B cell (primary cell): ENCODE measurements at regions of chr1 and their contacts with region 1.

Region 1: DNA sequence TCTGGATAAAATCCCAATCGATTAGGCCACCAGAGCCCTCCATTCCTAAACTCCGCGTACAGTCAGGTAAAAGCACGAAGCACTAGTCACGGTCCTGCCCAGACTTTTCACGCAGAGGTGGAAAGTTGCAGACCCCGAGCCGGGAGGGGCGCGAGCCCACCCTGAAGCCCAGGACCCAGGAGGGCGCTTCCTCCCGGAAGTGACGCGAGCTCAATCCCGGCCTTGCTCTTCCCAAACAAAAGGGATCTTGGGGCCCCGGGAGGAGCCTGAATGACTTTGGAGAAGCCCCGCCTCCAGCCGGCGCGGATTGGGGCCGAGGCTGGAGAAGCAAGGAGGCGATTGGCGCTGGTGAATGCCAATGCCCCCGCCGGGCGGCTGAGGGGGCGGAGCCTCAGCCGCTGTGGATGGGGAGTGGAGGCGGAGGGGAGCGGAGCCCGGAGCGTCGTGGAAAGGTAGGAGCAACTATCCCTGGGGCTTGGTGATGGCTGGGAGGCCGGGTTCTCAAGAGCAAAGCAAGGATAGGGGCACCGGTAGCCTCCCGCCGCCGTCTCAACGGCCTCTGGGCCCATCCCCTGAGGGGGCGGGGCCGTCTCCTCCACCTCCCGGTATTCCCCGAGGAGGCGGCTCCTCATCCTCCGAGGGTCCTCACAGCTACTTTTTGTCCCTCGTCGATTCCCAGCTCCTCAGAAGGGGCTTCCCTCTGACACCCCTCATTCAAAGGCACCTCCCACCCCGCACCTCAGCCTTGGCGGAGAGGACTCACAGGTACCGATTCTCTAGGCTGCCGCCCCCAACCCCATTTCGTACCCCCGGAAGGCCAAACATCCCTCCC is at the start of gene CTTNBP2NL:
- DNase-seq: peak; percentile 86
- ATAC-seq: peak; percentile 96
- H3K4me3 ChIP-seq: peak within 1 kb of the TSS; percentile 24 to 98 (median 91)
- H3K4me3 Mint-ChIP-seq: peak within 1 kb of the TSS; percentile 98
- H3K27ac ChIP-seq: peak within 1 kb of the TSS in 1 of 2 donors; percentile 50
- H3K27ac Mint-ChIP-seq: peak within 1 kb of the TSS; percentile 75
- H3K4me1 ChIP-seq: peaks cover 21 to 33% of the 10 kb centered on the region in 2 donors
- H3K4me1 Mint-ChIP-seq: peaks cover 45% of the 10 kb centered on the region
- H3K27me3 ChIP-seq: peaks cover 0 to 5% (median 0%) of the 10 kb centered on the region in 4 experiments
- H3K27me3 Mint-ChIP-seq: no peaks in the 10 kb centered on the region
- CTCF ChIP-seq: no peak
- total RNA-seq, gene CTTNBP2NL: 28.3 and 28.9 TPM in 2 replicates

Region 2: GRCh38 chr1:112272101-112272772 is 123.8 kb before region 1 on chr1:
- CTCF ChIA-PET with region 1: no interaction called
- POLR2A ChIA-PET with region 1: no interaction called
- intact Hi-C with region 1: no loop called
- DNase-seq: no peak
- ATAC-seq: no peak
- H3K4me3 ChIP-seq: no peak overlapping the region
- H3K4me3 Mint-ChIP-seq: no peak overlapping the region
- H3K27ac ChIP-seq: no peak overlapping the region
- H3K27ac Mint-ChIP-seq: no peak overlapping the region
- H3K4me1 ChIP-seq: no peaks in the 10 kb centered on the region
- H3K4me1 Mint-ChIP-seq: no peaks in the 10 kb centered on the region
- H3K27me3 ChIP-seq: peaks cover 0 to 2% (median under 1%) of the 10 kb centered on the region in 4 experiments
- H3K27me3 Mint-ChIP-seq: peaks cover 39% of the 10 kb centered on the region
- CTCF ChIP-seq: no peak

Region 3: GRCh38 chr1:112466078-112466660 is 70.1 kb after region 1 on chr1:
- CTCF ChIA-PET with region 1: interaction called, 63 read pairs
- POLR2A ChIA-PET with region 1: interaction called, 7 read pairs
- intact Hi-C with region 1: loop called (anchors 1 kb)
- DNase-seq: peak; percentile 94
- ATAC-seq: peak; percentile 97
- H3K4me3 ChIP-seq: peak overlapping the region; percentile 5 to 51 (median 50)
- H3K4me3 Mint-ChIP-seq: peak overlapping the region; percentile 83
- H3K27ac ChIP-seq: peak overlapping the region; percentile 74 to 75
- H3K27ac Mint-ChIP-seq: peak overlapping the region; percentile 83
- H3K4me1 ChIP-seq: peaks cover 27 to 40% of the 10 kb centered on the region in 2 donors
- H3K4me1 Mint-ChIP-seq: peaks cover 46% of the 10 kb centered on the region
- H3K27me3 ChIP-seq: peaks cover 0 to 21% (median 12%) of the 10 kb centered on the region in 4 experiments
- H3K27me3 Mint-ChIP-seq: peaks cover 19% of the 10 kb centered on the region
- CTCF ChIP-seq: peak; percentile 75

Region 4: DNA sequence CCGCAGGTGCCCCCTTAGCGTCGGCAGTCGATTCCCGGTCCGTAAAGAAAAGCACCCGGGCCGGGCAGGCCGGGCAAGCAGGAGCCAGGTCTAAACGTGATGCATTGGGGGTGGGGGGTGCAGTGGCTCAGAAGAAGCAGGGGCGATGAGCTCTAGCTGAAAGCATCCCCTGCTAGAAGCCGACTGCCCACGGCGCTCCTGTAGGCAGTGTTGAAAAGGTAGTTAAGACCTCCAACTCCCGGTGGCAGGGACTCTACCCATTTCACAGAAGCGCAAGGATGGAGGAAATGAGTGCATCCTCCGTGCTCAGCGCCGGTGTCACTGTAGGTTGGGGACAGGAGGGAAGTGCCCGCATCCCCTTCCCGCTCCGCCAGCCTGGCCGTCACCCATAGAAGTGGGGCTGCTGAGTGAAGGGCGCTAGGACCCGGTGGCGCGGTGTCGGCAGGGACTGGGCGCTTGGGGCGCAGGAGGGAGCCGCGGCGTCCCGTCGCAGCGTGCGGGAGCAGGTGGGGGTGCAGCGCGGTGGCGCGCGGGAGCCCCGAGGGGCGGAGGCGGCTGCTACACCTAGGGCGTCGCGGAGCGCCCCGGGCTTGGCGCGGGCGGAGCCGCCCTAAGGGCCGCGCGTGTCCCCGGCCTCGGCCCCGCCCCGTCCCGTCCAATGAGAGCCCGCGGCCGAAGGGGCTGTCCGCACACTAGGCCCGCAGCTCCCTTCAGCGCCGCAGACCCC is 112.4 kb after region 1 on chr1 and contains the start of gene WNT2B:
- CTCF ChIA-PET with region 1: interaction called, 31 read pairs
- POLR2A ChIA-PET with region 1: no interaction called
- intact Hi-C with region 1: loop called (anchors 2 kb)
- DNase-seq: peak; percentile 71
- ATAC-seq: peak; percentile 63
- H3K4me3 ChIP-seq: peak within 1 kb of the TSS; percentile 35 to 67 (median 56)
- H3K4me3 Mint-ChIP-seq: peak within 1 kb of the TSS; percentile 89
- H3K27ac ChIP-seq: no peak within 1 kb of the TSS
- H3K27ac Mint-ChIP-seq: peak within 1 kb of the TSS; percentile 46
- H3K4me1 ChIP-seq: peaks cover 36 to 49% of the 10 kb centered on the region in 2 donors
- H3K4me1 Mint-ChIP-seq: peaks cover 36% of the 10 kb centered on the region
- H3K27me3 ChIP-seq: peaks cover 0 to 63% (median 14%) of the 10 kb centered on the region in 4 experiments
- H3K27me3 Mint-ChIP-seq: peaks cover 17% of the 10 kb centered on the region
- CTCF ChIP-seq: no peak
- total RNA-seq, gene WNT2B: 5.2 and 5.9 TPM in 2 replicates

Region 5: GRCh38 chr1:112614460-112615065 is 218.5 kb after region 1 on chr1:
- CTCF ChIA-PET with region 1: interaction called, 87 read pairs
- POLR2A ChIA-PET with region 1: no interaction called
- intact Hi-C with region 1: no loop called
- DNase-seq: peak; percentile 46
- ATAC-seq: no peak
- H3K4me3 ChIP-seq: no peak overlapping the region
- H3K4me3 Mint-ChIP-seq: no peak overlapping the region
- H3K27ac ChIP-seq: no peak overlapping the region
- H3K27ac Mint-ChIP-seq: no peak overlapping the region
- H3K4me1 ChIP-seq: peaks cover 5 to 9% of the 10 kb centered on the region in 2 donors
- H3K4me1 Mint-ChIP-seq: peaks cover 12% of the 10 kb centered on the region
- H3K27me3 ChIP-seq: no peaks in the 10 kb centered on the region
- H3K27me3 Mint-ChIP-seq: no peaks in the 10 kb centered on the region
- CTCF ChIP-seq: peak; percentile 64

Region 6: DNA sequence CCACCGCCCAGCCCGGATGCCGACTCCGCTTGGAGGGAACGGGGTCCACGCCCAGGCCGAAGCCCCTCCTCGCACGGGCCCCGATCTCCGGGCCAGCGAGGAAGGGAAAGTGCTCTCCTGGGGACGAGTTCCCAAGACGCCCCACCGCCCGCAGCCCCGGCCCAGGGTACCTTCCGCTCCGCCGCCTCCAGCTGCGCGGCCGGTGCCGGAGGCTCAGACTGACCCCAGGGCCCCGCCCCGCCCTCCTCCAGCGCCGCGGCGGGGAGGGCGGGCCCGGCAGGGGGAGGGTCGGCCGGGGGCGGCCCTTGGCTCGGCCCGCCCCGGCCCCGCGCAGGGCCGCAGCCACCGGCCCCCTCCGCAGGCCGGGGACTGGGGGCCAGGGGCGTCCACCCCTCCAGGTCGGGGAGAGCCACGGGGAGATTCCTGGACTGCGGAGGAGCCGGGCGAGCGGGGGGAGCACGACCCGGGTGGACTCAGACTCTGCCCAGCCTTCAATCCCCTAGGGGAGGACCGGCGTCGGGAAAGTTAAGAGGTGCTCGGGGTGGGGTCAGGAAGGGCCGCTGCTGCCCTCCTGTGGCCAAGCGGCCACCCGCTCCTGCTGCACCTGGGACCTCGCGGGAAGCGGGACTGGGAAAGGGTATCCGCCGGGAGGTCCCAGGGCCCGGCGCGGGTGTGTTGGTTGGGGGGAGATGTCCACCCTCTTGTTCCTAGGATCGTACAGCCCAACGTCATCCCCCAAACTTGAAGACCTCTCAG is 311.0 kb after region 1 on chr1 and contains the start of gene RHOC:
- CTCF ChIA-PET with region 1: interaction called, 122 read pairs
- POLR2A ChIA-PET with region 1: interaction called, 3 read pairs
- intact Hi-C with region 1: loop called (anchors 1 kb)
- DNase-seq: peak; percentile 81
- ATAC-seq: peak; percentile 85
- H3K4me3 ChIP-seq: peak within 1 kb of the TSS in 4 of 5 experiments; percentile 56 to 74 (median 66)
- H3K4me3 Mint-ChIP-seq: peak within 1 kb of the TSS; percentile 88
- H3K27ac ChIP-seq: peak within 1 kb of the TSS in 1 of 2 donors; percentile 49
- H3K27ac Mint-ChIP-seq: peak within 1 kb of the TSS; percentile 81
- H3K4me1 ChIP-seq: peaks cover 34 to 46% of the 10 kb centered on the region in 2 donors
- H3K4me1 Mint-ChIP-seq: peaks cover 50% of the 10 kb centered on the region
- H3K27me3 ChIP-seq: no peaks in the 10 kb centered on the region
- H3K27me3 Mint-ChIP-seq: no peaks in the 10 kb centered on the region
- CTCF ChIP-seq: peak; percentile 72
- total RNA-seq, gene RHOC: 18.5 and 21.0 TPM in 2 replicates